Activated T-helper 1 cell treated with anti-CD3 and anti-CD28 coated beads, Interleukin-12 subunit alpha, Interleukin-12 subunit beta, Interleukin-2, Interleukin-4 antibody, amounts not matched to agents 30 ng/mL and 10 ng/mL and 1 ng/mL, durations not matched to agents 14 hours and 24 hours and 36 hours (primary cell): ENCODE measurements at regions of chr10 and their contacts with region 1.

Region 1: GRCh38 chr10:30701451-30702173 is 72.1 kb upstream of the LYZL2 start:
- DNase-seq: peak; percentile 74
- H3K4me3 Mint-ChIP-seq: peak overlapping the region; percentile 73
- H3K27ac Mint-ChIP-seq: peak overlapping the region; percentile 94
- H3K4me1 Mint-ChIP-seq: peaks cover 91% of the 10 kb centered on the region
- H3K27me3 Mint-ChIP-seq: no peaks in the 10 kb centered on the region

Region 2: DNA sequence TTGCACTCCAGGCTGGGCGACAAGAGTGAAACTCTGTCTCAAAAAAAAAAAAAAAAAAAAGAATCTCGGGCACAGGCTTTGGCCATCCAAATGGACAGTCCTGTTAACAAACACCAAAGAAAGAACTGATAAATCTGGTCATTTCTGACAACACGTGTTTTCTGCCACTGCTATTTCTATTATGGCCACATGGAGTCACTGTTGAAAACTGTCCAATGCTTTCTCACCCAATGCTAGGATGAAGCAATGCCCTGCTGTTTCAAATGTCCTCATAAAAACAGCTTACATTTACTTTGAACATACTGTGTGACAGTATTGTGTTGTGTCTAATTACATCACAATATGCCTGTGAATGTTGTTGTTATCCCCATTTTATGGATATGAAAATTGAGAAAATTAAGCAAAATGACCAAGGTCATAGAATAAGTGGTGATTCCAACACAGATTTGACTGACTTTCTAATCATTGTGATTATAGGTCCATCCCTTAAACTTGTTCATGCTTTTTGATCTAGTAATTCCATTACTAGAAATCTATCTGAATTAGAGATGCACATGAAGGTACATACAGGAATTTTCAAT is 287.5 kb before region 1 on chr10:
- intact Hi-C with region 1: loop called (anchors 5 kb)
- DNase-seq: no peak
- H3K4me3 Mint-ChIP-seq: no peak overlapping the region
- H3K27ac Mint-ChIP-seq: no peak overlapping the region
- H3K4me1 Mint-ChIP-seq: peaks cover 34% of the 10 kb centered on the region
- H3K27me3 Mint-ChIP-seq: no peaks in the 10 kb centered on the region

Region 3: DNA sequence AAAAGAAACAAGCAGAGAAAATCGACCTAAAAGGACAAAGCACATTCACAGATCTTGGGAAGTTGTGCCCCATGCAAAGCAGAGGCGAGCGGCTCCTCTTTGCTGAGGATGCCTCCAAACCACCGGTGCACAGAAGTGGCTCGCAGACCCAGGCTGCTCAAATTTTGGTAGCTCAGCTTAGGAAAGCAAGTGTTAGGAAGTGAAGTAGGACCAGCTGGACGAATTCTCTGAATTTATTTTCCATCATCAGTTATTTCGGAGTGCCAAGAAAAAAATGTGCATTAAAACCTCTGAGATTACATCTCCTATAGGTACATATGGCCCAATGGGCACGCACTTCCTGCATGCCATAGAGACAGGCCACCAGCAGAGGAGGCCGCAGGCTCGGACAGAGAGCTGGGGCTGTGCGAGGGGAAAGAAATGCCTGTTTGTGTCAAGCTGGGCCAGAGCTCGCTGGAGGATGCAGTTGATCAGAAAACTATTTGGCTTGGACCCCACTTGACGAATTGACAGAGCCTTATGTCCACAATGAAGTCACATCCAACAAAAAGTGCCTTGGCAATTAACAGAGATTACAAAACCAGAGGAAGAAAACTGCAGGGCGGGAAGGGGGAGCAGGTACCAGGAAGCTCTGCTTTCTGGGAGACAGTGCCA is 50.2 kb after region 1 on chr10:
- intact Hi-C with region 1: loop called (anchors 2 kb)
- DNase-seq: no peak
- H3K4me3 Mint-ChIP-seq: peak overlapping the region; percentile 43
- H3K27ac Mint-ChIP-seq: peak overlapping the region; percentile 80
- H3K4me1 Mint-ChIP-seq: peaks cover 61% of the 10 kb centered on the region
- H3K27me3 Mint-ChIP-seq: no peaks in the 10 kb centered on the region

Region 4: DNA sequence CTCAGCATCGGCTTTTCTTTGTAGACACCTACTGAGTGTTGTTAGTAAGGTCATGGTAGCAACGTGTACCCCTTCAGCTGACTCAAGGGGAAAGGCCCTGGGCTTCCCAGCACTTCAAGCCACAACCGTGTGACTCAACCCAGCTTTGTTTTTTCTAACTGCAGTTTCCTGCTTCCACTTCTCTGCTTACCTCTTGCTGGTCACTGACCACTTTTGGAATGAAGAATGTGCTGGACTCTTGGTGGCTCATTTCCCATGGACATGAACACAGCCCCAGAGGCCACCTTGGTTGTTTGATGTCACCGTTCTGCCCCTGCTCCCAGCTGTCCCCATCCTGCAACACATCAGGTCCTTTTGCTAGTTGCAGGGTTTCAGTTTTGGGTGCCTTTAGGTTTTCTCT is 399.5 kb after region 1 on chr10:
- intact Hi-C with region 1: loop called (anchors 1 kb)
- DNase-seq: peak; percentile 72
- H3K4me3 Mint-ChIP-seq: peak overlapping the region; percentile 51
- H3K27ac Mint-ChIP-seq: peak overlapping the region; percentile 94
- H3K4me1 Mint-ChIP-seq: peaks cover 81% of the 10 kb centered on the region
- H3K27me3 Mint-ChIP-seq: no peaks in the 10 kb centered on the region

Region 5: GRCh38 chr10:31928549-31929260 is 1227.1 kb after region 1 on chr10 and contains the start of gene ARHGAP12:
- intact Hi-C with region 1: loop called (anchors 5 kb)
- DNase-seq: peak; percentile 68
- H3K4me3 Mint-ChIP-seq: peak within 1 kb of the TSS; percentile 88
- H3K27ac Mint-ChIP-seq: peak within 1 kb of the TSS; percentile 73
- H3K4me1 Mint-ChIP-seq: peaks cover 56% of the 10 kb centered on the region
- H3K27me3 Mint-ChIP-seq: peaks cover 13% of the 10 kb centered on the region
- total RNA-seq, gene ARHGAP12: 2.4 and 3.5 TPM in 2 replicates

Region 6: DNA sequence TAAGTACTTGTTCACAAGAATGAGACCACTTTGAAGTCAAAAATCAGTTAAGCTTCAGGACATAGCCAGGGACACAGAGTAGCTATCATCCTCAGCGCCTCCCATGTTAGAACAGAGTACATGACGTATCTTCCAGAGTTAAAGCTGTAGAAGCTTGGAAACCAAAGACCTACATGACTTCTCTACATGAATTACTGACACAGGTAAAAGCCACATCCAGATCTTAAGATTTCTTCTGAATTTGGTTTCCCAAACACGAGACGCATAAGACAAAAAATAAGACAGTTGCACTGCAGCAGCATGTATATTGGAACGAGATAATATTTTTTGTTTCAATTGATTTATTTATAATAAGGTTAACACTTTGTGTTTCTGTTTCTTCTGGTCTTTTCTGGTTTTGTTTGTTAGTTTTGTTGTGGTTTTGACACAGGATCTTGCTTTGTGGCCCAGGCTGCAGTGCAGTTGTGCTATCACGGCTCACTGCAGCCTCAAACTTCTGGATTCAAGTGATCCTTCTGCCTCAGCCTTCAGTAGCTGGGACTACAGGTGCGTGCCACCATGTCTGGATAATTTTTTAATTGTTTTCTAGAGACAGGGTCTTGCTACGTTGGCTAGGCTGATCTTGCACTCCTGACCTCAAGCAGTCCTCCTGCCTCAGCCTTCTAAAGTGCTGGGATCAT is 1655.6 kb after region 1 on chr10:
- intact Hi-C with region 1: loop called (anchors 10 kb)
- DNase-seq: no peak
- H3K4me3 Mint-ChIP-seq: peak overlapping the region; percentile 61
- H3K27ac Mint-ChIP-seq: peak overlapping the region; percentile 93
- H3K4me1 Mint-ChIP-seq: peaks cover 73% of the 10 kb centered on the region
- H3K27me3 Mint-ChIP-seq: no peaks in the 10 kb centered on the region